Natural killer cell (primary cell): ENCODE measurements at regions of chr9 and their contacts with region 1.

Region 1: GRCh38 chr9:96449845-96450612 is at the start of gene HABP4:
- DNase-seq: peak; percentile 96 to 97
- ATAC-seq: peak; percentile 94 to 98 (median 94)
- H3K4me3 ChIP-seq: peak within 1 kb of the TSS; percentile 70
- H3K4me3 Mint-ChIP-seq: peak within 1 kb of the TSS; percentile 90
- H3K27ac ChIP-seq: peak within 1 kb of the TSS; percentile 17
- H3K27ac Mint-ChIP-seq: peak within 1 kb of the TSS; percentile 32 to 71
- H3K4me1 ChIP-seq: peaks cover 15% of the 10 kb centered on the region
- H3K4me1 Mint-ChIP-seq: peaks cover 6 to 25% of the 10 kb centered on the region in 2 donors
- H3K27me3 ChIP-seq: no peaks in the 10 kb centered on the region
- H3K27me3 Mint-ChIP-seq: peaks cover 14 to 28% of the 10 kb centered on the region in 2 donors
- CTCF ChIP-seq: no peak
- total RNA-seq, gene HABP4: 3.0 to 3.9 (median 3.6) TPM

Region 2: GRCh38 chr9:96408409-96409280 is 41.4 kb before region 1 on chr9:
- intact Hi-C with region 1: no loop called
- DNase-seq: no peak
- ATAC-seq: no peak
- H3K4me3 ChIP-seq: no peak overlapping the region
- H3K4me3 Mint-ChIP-seq: no peak overlapping the region
- H3K27ac ChIP-seq: no peak overlapping the region
- H3K27ac Mint-ChIP-seq: peak overlapping the region in 1 of 2 donors; percentile 4
- H3K4me1 ChIP-seq: peaks cover 4% of the 10 kb centered on the region
- H3K4me1 Mint-ChIP-seq: peaks cover 7 to 17% of the 10 kb centered on the region in 2 donors
- H3K27me3 ChIP-seq: no peaks in the 10 kb centered on the region
- H3K27me3 Mint-ChIP-seq: no peaks in the 10 kb centered on the region
- CTCF ChIP-seq: no peak

Region 3: DNA sequence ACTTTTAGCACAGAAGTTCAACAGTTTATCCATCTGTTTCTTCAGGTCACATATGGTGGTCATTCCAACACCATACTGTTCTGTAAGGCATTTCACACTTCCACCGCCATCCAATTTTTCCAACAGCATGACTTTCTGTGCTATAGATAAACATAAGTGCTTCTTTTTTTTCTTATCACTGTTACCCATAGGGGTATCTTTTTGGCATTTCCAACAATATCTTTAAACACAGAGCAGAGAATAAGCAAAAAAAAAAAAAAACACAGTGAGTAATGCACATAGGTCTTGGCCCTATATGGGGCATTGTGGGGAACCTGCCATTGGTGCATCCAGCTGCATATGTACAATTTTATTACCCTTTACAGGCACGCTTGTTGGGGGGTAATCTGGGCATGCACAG is 19.7 kb before region 1 on chr9:
- intact Hi-C with region 1: loop called (anchors 2 kb)
- DNase-seq: no peak
- ATAC-seq: no peak
- H3K4me3 ChIP-seq: no peak overlapping the region
- H3K4me3 Mint-ChIP-seq: no peak overlapping the region
- H3K27ac ChIP-seq: no peak overlapping the region
- H3K27ac Mint-ChIP-seq: no peak overlapping the region
- H3K4me1 ChIP-seq: peaks cover 12% of the 10 kb centered on the region
- H3K4me1 Mint-ChIP-seq: peaks cover 9% of the 10 kb centered on the region in 2 donors
- H3K27me3 ChIP-seq: no peaks in the 10 kb centered on the region
- H3K27me3 Mint-ChIP-seq: peaks cover 6 to 10% of the 10 kb centered on the region in 2 donors
- CTCF ChIP-seq: no peak

Region 4: GRCh38 chr9:96654443-96655197 is 204.6 kb after region 1 on chr9:
- intact Hi-C with region 1: loop called (anchors 10 kb)
- DNase-seq: peak; percentile 78 to 93
- ATAC-seq: peak; percentile 82 to 89 (median 83)
- H3K4me3 ChIP-seq: peak overlapping the region; percentile 35
- H3K4me3 Mint-ChIP-seq: peak overlapping the region; percentile 93
- H3K27ac ChIP-seq: peak overlapping the region; percentile 68
- H3K27ac Mint-ChIP-seq: peak overlapping the region; percentile 92 to 96
- H3K4me1 ChIP-seq: peaks cover 11% of the 10 kb centered on the region
- H3K4me1 Mint-ChIP-seq: peaks cover 17 to 20% of the 10 kb centered on the region in 2 donors
- H3K27me3 ChIP-seq: no peaks in the 10 kb centered on the region
- H3K27me3 Mint-ChIP-seq: peaks cover 5 to 6% of the 10 kb centered on the region in 2 donors
- CTCF ChIP-seq: no peak